ENCODE measurements at regions of chr6 and their contacts with region 1.

Region 1: DNA sequence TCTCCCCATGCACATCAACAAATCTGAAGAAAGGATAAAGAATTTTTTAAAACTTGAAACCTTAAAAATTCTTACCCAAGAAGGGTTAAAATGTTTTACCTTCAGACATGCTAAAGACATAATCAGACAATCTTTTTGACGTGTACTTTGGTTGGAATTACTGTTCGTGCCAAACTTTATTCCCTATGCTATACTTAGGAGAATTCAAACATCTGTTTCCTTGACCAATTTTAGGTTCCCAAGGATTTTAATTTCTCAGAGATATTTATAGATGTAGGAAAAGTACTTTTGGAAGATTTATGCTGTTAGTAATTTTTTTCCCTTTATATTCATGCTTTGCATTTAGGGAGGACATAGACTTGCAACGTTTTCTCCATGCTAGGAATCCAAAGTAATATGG is 108.4 kb downstream of the AFG1L start:
- DNase-seq: no peak
- H3K4me3 ChIP-seq: no peak overlapping the region
- H3K27ac ChIP-seq: no peak overlapping the region
- H3K4me1 ChIP-seq: no peaks in the 10 kb centered on the region
- H3K27me3 ChIP-seq: no peaks in the 10 kb centered on the region
- CTCF ChIP-seq: no peak

Region 2: DNA sequence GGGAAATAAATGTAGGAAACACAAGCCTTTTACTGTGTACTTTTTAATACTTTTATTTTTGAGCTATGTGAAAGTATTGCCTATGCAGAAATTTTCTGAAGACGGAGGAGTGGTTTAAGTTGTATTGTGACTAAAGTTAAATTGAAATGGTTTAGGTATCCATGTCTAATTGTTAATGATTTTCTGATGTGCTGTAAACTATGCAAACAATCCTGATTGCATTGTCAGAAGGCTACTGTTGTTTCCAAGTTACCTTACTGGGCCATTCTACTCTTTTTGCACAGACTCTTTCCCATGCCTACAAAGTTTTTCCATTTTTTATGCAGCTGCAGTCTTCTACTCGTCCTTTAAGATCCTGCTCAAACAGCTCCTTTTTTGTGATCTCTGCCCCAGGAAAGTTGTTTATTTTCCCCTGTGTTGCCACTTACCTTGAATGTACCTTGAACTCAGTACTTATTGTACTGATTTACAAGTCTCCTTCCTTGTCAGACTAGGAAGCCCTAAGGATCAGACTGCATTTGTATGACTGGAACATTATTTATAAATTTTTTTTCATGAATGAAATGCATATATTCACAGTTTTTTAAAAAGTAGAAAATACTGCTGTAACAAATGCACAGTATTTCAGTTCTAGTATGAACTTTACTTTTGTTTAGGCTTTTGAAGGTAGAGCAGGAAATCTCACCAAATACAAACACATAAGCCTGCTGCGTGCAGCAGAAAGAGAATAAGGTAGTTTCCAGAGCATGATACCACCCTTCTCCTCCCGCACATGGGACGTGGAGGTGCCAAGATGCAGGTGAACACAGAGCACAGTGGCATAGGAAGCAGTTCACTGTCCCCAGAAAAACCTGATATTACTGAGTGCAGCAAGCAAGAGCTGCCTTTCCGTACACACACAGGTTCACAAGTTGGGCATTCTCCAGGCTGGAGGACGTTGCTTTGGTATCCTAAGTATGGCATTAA is 1944.9 kb before region 1 on chr6:
- CTCF ChIA-PET with region 1: interaction called, 15 read pairs
- POLR2A ChIA-PET with region 1: no interaction called
- intact Hi-C with region 1: no loop called
- DNase-seq: no peak
- H3K4me3 ChIP-seq: no peak overlapping the region
- H3K27ac ChIP-seq: no peak overlapping the region
- H3K4me1 ChIP-seq: no peaks in the 10 kb centered on the region
- H3K27me3 ChIP-seq: no peaks in the 10 kb centered on the region
- CTCF ChIP-seq: no peak

Measured in PC-9 (cell line).